CD8-positive, alpha-beta memory T cell (primary cell): ENCODE measurements at regions of chr17 and their contacts with region 1.

Region 1: DNA sequence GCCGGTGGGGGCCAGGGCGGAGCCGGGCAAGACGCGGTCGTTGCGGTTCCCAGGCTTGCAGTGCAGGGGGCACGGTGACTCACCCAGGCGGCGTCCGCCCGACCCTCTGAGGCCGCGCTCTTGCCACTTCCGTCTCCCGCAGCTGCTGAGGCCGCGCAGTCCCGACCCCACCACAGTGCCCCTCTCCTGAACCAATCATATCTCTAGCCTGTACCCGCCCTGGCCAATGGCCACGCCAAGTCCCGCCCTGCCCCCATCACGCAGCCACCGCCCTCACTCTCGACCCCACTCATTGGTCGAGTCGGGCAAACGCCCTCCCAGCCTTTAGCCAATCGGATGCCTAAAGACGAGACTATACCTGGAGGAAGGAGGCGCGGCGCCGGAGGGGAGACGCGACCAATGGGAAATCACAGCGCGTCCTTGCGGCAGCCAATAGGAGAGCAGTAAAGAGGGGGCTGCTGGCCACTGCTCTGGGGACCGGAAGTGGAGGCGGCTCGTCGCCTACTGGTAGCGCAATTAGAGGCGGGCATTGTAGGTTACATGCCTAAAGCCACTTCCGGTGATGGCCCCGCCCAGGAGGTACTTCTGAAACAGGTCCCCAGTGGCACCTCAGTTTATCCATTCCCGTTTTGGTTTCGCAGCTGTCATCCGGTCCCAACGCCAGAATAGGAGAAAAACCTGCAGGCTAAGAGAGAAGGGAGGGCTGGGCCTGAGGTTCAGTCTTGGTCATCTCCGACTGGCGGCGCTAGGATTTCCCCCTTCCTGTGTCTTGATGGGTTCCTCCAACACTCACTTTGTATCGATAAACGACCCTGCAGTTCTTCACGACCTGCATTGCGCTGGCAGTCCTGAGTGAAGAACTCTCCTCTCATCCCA is 3.5 kb upstream of the MTMR4 start:
- DNase-seq: peak; percentile 98 to 100 (median 100)
- H3K4me3 ChIP-seq: peak overlapping the region; percentile 81
- H3K4me3 Mint-ChIP-seq: peak overlapping the region; percentile 81 to 99 (median 97)
- H3K27ac ChIP-seq: peak overlapping the region; percentile 77
- H3K27ac Mint-ChIP-seq: peak overlapping the region; percentile 85 to 98 (median 94)
- H3K4me1 ChIP-seq: peaks cover 42% of the 10 kb centered on the region
- H3K4me1 Mint-ChIP-seq: peaks cover 36 to 49% (median 39%) of the 10 kb centered on the region in 3 donors
- H3K27me3 ChIP-seq: no peaks in the 10 kb centered on the region
- H3K27me3 Mint-ChIP-seq: peaks cover 0 to 7% of the 10 kb centered on the region in 2 donors

Region 2: GRCh38 chr17:58463821-58464220 is 54.2 kb before region 1 on chr17:
- CTCF ChIA-PET with region 1: no interaction called
- POLR2A ChIA-PET with region 1: no interaction called
- DNase-seq: no peak
- H3K4me3 ChIP-seq: no peak overlapping the region
- H3K4me3 Mint-ChIP-seq: no peak overlapping the region
- H3K27ac ChIP-seq: no peak overlapping the region
- H3K27ac Mint-ChIP-seq: no peak overlapping the region
- H3K4me1 ChIP-seq: no peaks in the 10 kb centered on the region
- H3K4me1 Mint-ChIP-seq: no peaks in the 10 kb centered on the region
- H3K27me3 ChIP-seq: no peaks in the 10 kb centered on the region
- H3K27me3 Mint-ChIP-seq: no peaks in the 10 kb centered on the region

Region 3: GRCh38 chr17:58487589-58488427 is 30.2 kb before region 1 on chr17 and contains the start of gene HSF5:
- CTCF ChIA-PET with region 1: interaction called, 5 read pairs
- POLR2A ChIA-PET with region 1: interaction called, 13 read pairs
- DNase-seq: peak; percentile 56 to 83 (median 81)
- H3K4me3 ChIP-seq: peak within 1 kb of the TSS; percentile 12
- H3K4me3 Mint-ChIP-seq: peak within 1 kb of the TSS; percentile 59 to 82 (median 69)
- H3K27ac ChIP-seq: no peak within 1 kb of the TSS
- H3K27ac Mint-ChIP-seq: peak within 1 kb of the TSS in 5 of 8 donors; percentile 25 to 77 (median 63)
- H3K4me1 ChIP-seq: peaks cover 5% of the 10 kb centered on the region
- H3K4me1 Mint-ChIP-seq: peaks cover 8 to 14% (median 13%) of the 10 kb centered on the region in 3 donors
- H3K27me3 ChIP-seq: no peaks in the 10 kb centered on the region
- H3K27me3 Mint-ChIP-seq: no peaks in the 10 kb centered on the region
- total RNA-seq, gene HSF5: 5.4 to 5.5 TPM

Region 4: DNA sequence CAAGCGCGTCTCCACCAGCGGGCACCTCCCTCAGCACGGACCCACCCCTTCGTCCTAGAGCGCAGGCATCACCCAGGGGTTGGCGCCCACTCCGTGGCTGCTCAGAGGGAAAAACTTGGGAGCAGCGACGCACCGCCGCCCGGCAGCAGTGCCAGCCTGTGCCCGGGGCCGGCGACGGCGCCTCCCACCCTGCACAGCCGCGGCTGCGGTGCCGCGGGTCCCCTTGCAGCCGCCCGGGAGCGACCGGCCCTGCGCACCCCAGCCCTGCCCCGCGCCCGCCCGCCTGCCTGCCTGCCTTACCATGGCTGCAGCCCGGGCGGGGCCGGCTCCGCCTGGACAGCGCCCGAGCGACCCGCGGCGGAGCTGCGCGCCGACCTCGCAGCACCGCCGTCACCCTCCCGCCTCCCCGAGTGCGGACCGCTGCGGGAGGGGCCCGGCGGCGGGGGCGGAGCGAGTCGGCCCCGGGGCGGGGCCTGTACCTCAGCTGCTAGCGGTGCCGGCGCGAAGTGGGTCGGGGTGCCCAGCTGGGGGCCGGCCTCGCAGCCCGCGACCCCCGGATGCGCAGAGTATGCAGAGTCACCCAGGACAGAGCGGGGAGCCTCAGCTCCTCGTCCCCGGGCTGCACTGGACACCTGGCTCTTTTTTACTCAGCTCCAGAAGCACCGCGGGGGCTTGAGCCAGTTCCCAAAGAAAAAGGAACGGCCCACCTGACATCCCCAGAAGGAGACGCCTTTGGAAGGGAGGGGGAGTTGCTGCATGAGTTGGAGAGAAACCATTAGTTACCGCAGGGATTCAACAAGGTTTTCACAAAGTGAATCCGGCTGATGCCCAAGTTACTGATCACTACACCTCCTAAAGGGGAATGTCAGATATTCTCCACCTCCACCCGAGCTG is 13.9 kb after region 1 on chr17:
- CTCF ChIA-PET with region 1: interaction called, 16 read pairs
- POLR2A ChIA-PET with region 1: no interaction called
- DNase-seq: peak; percentile 56 to 73 (median 62)
- H3K4me3 ChIP-seq: peak overlapping the region; percentile 45
- H3K4me3 Mint-ChIP-seq: peak overlapping the region in 6 of 7 donors; percentile 63 to 89 (median 67)
- H3K27ac ChIP-seq: no peak overlapping the region
- H3K27ac Mint-ChIP-seq: peak overlapping the region in 3 of 8 donors; percentile 60 to 91 (median 64)
- H3K4me1 ChIP-seq: peaks cover 5% of the 10 kb centered on the region
- H3K4me1 Mint-ChIP-seq: peaks cover 0 to 6% (median 3%) of the 10 kb centered on the region in 3 donors
- H3K27me3 ChIP-seq: peaks cover 9% of the 10 kb centered on the region
- H3K27me3 Mint-ChIP-seq: peaks cover 19 to 31% of the 10 kb centered on the region in 2 donors

Region 5: GRCh38 chr17:58556833-58557250 is 38.9 kb after region 1 on chr17:
- CTCF ChIA-PET with region 1: no interaction called
- POLR2A ChIA-PET with region 1: no interaction called
- DNase-seq: no peak
- H3K4me3 ChIP-seq: no peak overlapping the region
- H3K4me3 Mint-ChIP-seq: no peak overlapping the region
- H3K27ac ChIP-seq: no peak overlapping the region
- H3K27ac Mint-ChIP-seq: peak overlapping the region in 1 of 8 donors; percentile 11
- H3K4me1 ChIP-seq: no peaks in the 10 kb centered on the region
- H3K4me1 Mint-ChIP-seq: peaks cover 4 to 9% (median 5%) of the 10 kb centered on the region in 3 donors
- H3K27me3 ChIP-seq: no peaks in the 10 kb centered on the region
- H3K27me3 Mint-ChIP-seq: peaks cover 0 to 3% of the 10 kb centered on the region in 2 donors

Region 6: GRCh38 chr17:58631523-58632323 is 113.8 kb after region 1 on chr17:
- CTCF ChIA-PET with region 1: interaction called, 11 read pairs
- POLR2A ChIA-PET with region 1: interaction called, 13 read pairs
- DNase-seq: peak; percentile 85 to 95 (median 93)
- H3K4me3 ChIP-seq: peak overlapping the region; percentile 47
- H3K4me3 Mint-ChIP-seq: no peak overlapping the region
- H3K27ac ChIP-seq: peak overlapping the region; percentile 92
- H3K27ac Mint-ChIP-seq: no peak overlapping the region
- H3K4me1 ChIP-seq: peaks cover 15% of the 10 kb centered on the region
- H3K4me1 Mint-ChIP-seq: peaks cover 0 to 8% (median 0%) of the 10 kb centered on the region in 3 donors
- H3K27me3 ChIP-seq: no peaks in the 10 kb centered on the region
- H3K27me3 Mint-ChIP-seq: peaks cover 0 to 3% of the 10 kb centered on the region in 2 donors

Region 7: DNA sequence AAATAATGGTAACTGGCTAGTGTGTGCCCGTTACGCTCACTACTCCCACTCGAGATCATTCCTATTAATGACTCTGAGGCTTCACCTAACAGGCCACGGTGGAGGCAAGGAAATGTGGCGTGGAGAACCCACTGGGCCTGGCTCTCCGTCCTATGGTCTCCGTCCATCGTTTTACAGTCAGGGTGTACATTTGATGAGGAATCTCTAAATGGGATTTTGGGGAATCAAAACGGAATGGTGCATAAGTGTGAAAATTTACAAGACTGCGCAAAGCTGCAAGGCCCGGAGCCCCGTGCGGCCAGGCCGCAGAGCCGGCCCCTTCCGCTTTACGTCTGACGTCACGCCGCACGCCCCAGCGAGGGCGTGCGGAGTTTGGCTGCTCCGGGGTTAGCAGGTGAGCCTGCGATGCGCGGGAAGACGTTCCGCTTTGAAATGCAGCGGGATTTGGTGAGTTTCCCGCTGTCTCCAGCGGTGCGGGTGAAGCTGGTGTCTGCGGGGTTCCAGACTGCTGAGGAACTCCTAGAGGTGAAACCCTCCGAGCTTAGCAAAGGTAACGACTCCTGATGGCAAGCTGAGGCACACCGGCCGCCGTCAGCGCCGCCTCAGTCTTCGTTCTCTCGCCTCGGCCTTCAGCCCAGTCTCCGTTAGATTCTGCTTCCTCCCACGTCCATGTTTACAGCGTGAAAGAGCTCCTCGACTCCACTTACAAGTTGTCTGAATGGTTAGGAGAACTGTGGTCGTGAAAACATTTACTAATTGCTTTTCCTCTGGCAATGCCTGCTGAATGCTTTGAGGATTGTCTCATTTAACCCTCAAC is 174.5 kb after region 1 on chr17 and contains the start of gene RAD51C:
- CTCF ChIA-PET with region 1: interaction called, 3 read pairs
- POLR2A ChIA-PET with region 1: interaction called, 10 read pairs
- DNase-seq: peak; percentile 71 to 88 (median 78)
- H3K4me3 ChIP-seq: peak within 1 kb of the TSS; percentile 88
- H3K4me3 Mint-ChIP-seq: peak within 1 kb of the TSS; percentile 88 to 97 (median 94)
- H3K27ac ChIP-seq: peak within 1 kb of the TSS; percentile 81
- H3K27ac Mint-ChIP-seq: peak within 1 kb of the TSS; percentile 83 to 98 (median 92)
- H3K4me1 ChIP-seq: peaks cover 16% of the 10 kb centered on the region
- H3K4me1 Mint-ChIP-seq: peaks cover 25 to 37% (median 25%) of the 10 kb centered on the region in 3 donors
- H3K27me3 ChIP-seq: no peaks in the 10 kb centered on the region
- H3K27me3 Mint-ChIP-seq: no peaks in the 10 kb centered on the region
- total RNA-seq, gene RAD51C: 88.9 to 95.3 TPM

Region 8: GRCh38 chr17:59004338-59005111 is 486.6 kb after region 1 on chr17:
- CTCF ChIA-PET with region 1: interaction called, 15 read pairs
- POLR2A ChIA-PET with region 1: interaction called, 3 read pairs
- DNase-seq: peak; percentile 46 to 74 (median 57)
- H3K4me3 ChIP-seq: no peak overlapping the region
- H3K4me3 Mint-ChIP-seq: peak overlapping the region in 1 of 7 donors; percentile 15
- H3K27ac ChIP-seq: no peak overlapping the region
- H3K27ac Mint-ChIP-seq: peak overlapping the region; percentile 66 to 94 (median 82)
- H3K4me1 ChIP-seq: peaks cover 9% of the 10 kb centered on the region
- H3K4me1 Mint-ChIP-seq: peaks cover 13 to 19% (median 17%) of the 10 kb centered on the region in 3 donors
- H3K27me3 ChIP-seq: no peaks in the 10 kb centered on the region
- H3K27me3 Mint-ChIP-seq: no peaks in the 10 kb centered on the region